ENCODE measurements at regions of chr5 and their contacts with region 1.

Region 1: GRCh38 chr5:139251281-139251687 is 42.3 kb upstream of the MATR3 start:
- DNase-seq: peak; percentile 38
- ATAC-seq: peak; percentile 89
- H3K4me3 ChIP-seq: no peak overlapping the region
- H3K27ac ChIP-seq: peak overlapping the region; percentile 38
- H3K4me1 ChIP-seq: peaks cover 14% of the 10 kb centered on the region
- H3K27me3 ChIP-seq: no peaks in the 10 kb centered on the region
- CTCF ChIP-seq: peak; percentile 65 to 78 (median 68)
- EP300 ChIP-seq: no peak
- POLR2A ChIP-seq: no peak
- RAD21 ChIP-seq: peak; percentile 68

Region 2: GRCh38 chr5:139262742-139263445 is 11.6 kb after region 1 on chr5:
- CTCF ChIA-PET with region 1: interaction called, 44 read pairs
- POLR2A ChIA-PET with region 1: interaction called, 3 read pairs
- RAD21 ChIA-PET with region 1: interaction called, 28 read pairs
- SMC1A ChIA-PET with region 1: interaction called, 34 read pairs
- in situ Hi-C with region 1: no loop called
- intact Hi-C with region 1: no loop called
- DNase-seq: peak; percentile 40
- ATAC-seq: peak; percentile 99
- H3K4me3 ChIP-seq: no peak overlapping the region
- H3K27ac ChIP-seq: no peak overlapping the region
- H3K4me1 ChIP-seq: peaks cover 5% of the 10 kb centered on the region
- H3K27me3 ChIP-seq: no peaks in the 10 kb centered on the region; a peak in 1 of 4 replicates
- CTCF ChIP-seq: peak; percentile 83 to 93 (median 85)
- EP300 ChIP-seq: no peak
- POLR2A ChIP-seq: no peak
- RAD21 ChIP-seq: peak; percentile 99

Region 3: GRCh38 chr5:139301808-139302499 is 50.7 kb after region 1 on chr5:
- CTCF ChIA-PET with region 1: interaction called, 27 read pairs
- POLR2A ChIA-PET with region 1: interaction called, 5 read pairs
- RAD21 ChIA-PET with region 1: interaction called, 10 read pairs
- SMC1A ChIA-PET with region 1: interaction called, 20 read pairs
- in situ Hi-C with region 1: no loop called
- intact Hi-C with region 1: no loop called
- DNase-seq: no peak
- ATAC-seq: peak; percentile 2
- H3K4me3 ChIP-seq: no peak overlapping the region
- H3K27ac ChIP-seq: no peak overlapping the region
- H3K4me1 ChIP-seq: peaks cover 37% of the 10 kb centered on the region
- H3K27me3 ChIP-seq: no peaks in the 10 kb centered on the region
- CTCF ChIP-seq: no peak
- EP300 ChIP-seq: no peak
- POLR2A ChIP-seq: no peak
- RAD21 ChIP-seq: no peak

Region 4: GRCh38 chr5:139341650-139342422 is 90.6 kb after region 1 on chr5 and contains the start of gene PAIP2:
- CTCF ChIA-PET with region 1: interaction called, 24 read pairs
- POLR2A ChIA-PET with region 1: interaction called, 5 read pairs
- RAD21 ChIA-PET with region 1: interaction called, 17 read pairs
- SMC1A ChIA-PET with region 1: interaction called, 14 read pairs
- in situ Hi-C with region 1: no loop called
- intact Hi-C with region 1: no loop called
- DNase-seq: peak; percentile 90
- ATAC-seq: peak; percentile 89
- H3K4me3 ChIP-seq: peak within 1 kb of the TSS; percentile 93
- H3K27ac ChIP-seq: peak within 1 kb of the TSS; percentile 92
- H3K4me1 ChIP-seq: peaks cover 11% of the 10 kb centered on the region
- H3K27me3 ChIP-seq: no peaks in the 10 kb centered on the region
- CTCF ChIP-seq: peak; percentile 90 to 96 (median 90)
- EP300 ChIP-seq: peak in 1 of 2 experiments; percentile 30; a peak in 1 of 4 replicates
- POLR2A ChIP-seq: peak; percentile 97
- RAD21 ChIP-seq: peak; percentile 58
- polyA plus RNA-seq, gene PAIP2: 100 to 113 TPM

Region 5: GRCh38 chr5:139392678-139393496 is 141.6 kb after region 1 on chr5:
- CTCF ChIA-PET with region 1: interaction called, 35 read pairs
- POLR2A ChIA-PET with region 1: interaction called, 7 read pairs
- RAD21 ChIA-PET with region 1: interaction called, 25 read pairs
- SMC1A ChIA-PET with region 1: interaction called, 26 read pairs
- in situ Hi-C with region 1: no loop called
- intact Hi-C with region 1: loop called (anchors 5 kb)
- DNase-seq: no peak
- ATAC-seq: peak; percentile 69
- H3K4me3 ChIP-seq: peak overlapping the region; percentile 87
- H3K27ac ChIP-seq: peak overlapping the region; percentile 90
- H3K4me1 ChIP-seq: peaks cover 49% of the 10 kb centered on the region
- H3K27me3 ChIP-seq: no peaks in the 10 kb centered on the region
- CTCF ChIP-seq: peak; percentile 89 to 98 (median 90)
- EP300 ChIP-seq: no peak
- POLR2A ChIP-seq: no peak
- RAD21 ChIP-seq: peak; percentile 76

Measured in GM12878 (cell line).